ENCODE measurements at regions of chr4 and their contacts with region 1.

Region 1: DNA sequence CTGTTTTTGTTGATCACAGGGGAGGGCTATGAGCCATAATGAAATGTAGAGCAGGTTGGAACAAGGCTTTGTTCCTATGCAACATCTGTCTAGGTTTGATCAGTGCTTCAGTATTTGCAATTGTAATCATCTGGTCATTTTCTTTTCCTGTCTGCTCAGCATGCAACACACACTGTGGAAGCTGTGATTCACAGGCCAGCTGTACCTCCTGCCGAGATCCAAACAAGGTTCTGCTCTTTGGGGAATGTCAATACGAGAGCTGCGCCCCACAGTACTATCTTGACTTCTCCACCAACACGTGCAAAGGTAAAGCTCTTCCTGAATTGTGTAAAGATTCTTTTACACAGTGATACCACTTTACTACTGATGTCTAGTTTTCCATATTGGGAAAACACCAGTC is 181.9 kb upstream of the ANXA3 start:
- DNase-seq: no peak
- H3K4me3 ChIP-seq: no peak overlapping the region
- H3K27ac ChIP-seq: no peak overlapping the region
- H3K4me1 ChIP-seq: peaks cover 27% of the 10 kb centered on the region
- H3K27me3 ChIP-seq: no peaks in the 10 kb centered on the region
- CTCF ChIP-seq: no peak

Region 2: GRCh38 chr4:78299565-78299972 is 70.1 kb before region 1 on chr4:
- CTCF ChIA-PET with region 1: no interaction called
- POLR2A ChIA-PET with region 1: no interaction called
- intact Hi-C with region 1: loop called (anchors 2 kb)
- DNase-seq: no peak
- H3K4me3 ChIP-seq: no peak overlapping the region
- H3K27ac ChIP-seq: no peak overlapping the region
- H3K4me1 ChIP-seq: peaks cover 10% of the 10 kb centered on the region
- H3K27me3 ChIP-seq: no peaks in the 10 kb centered on the region
- CTCF ChIP-seq: no peak

Region 3: GRCh38 chr4:78332976-78333375 is 36.7 kb before region 1 on chr4:
- CTCF ChIA-PET with region 1: no interaction called
- POLR2A ChIA-PET with region 1: no interaction called
- intact Hi-C with region 1: loop called (anchors 2 kb)
- DNase-seq: no peak
- H3K4me3 ChIP-seq: no peak overlapping the region
- H3K27ac ChIP-seq: no peak overlapping the region
- H3K4me1 ChIP-seq: no peaks in the 10 kb centered on the region
- H3K27me3 ChIP-seq: no peaks in the 10 kb centered on the region
- CTCF ChIP-seq: no peak

Region 4: DNA sequence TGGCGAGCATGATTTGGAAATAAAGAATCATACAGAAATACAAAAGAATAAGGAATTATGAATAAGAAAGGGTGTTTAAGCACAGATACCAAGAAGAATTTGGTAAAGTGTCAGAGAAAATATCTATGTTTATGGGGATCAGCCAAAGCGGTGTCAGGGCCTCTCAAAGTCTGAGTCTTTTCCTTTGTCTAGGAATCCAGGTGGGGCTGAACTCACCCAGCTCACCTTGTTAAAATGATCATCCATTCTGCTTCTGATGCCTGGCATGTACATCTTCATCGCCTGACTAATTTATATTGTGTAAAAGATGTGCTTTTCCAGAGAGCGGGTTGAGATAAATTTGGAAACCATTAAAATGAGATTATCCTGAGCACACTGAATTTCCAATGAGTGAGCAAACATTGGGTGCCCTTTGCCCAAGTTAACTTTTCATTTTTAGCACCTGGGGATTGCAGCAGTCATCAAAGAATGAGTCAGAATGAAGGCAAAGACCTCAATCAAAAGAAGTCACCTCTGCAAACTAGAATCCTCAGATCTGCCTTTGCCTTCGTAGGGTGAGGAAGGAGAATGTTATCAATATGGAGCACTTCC is 40.0 kb after region 1 on chr4:
- CTCF ChIA-PET with region 1: no interaction called
- POLR2A ChIA-PET with region 1: interaction called, 24 read pairs
- intact Hi-C with region 1: no loop called
- DNase-seq: peak; percentile 1 to 66
- H3K4me3 ChIP-seq: no peak overlapping the region
- H3K27ac ChIP-seq: peak overlapping the region; percentile 52
- H3K4me1 ChIP-seq: peaks cover 19% of the 10 kb centered on the region
- H3K27me3 ChIP-seq: no peaks in the 10 kb centered on the region
- CTCF ChIP-seq: no peak